ENCODE measurements at regions of chr4 and their contacts with region 1.

Region 1: GRCh38 chr4:125389713-125390112 is 75.0 kb downstream of the FAT4 start:
- DNase-seq: peak; percentile 83
- ATAC-seq: peak; percentile 97
- H3K4me3 ChIP-seq: peak overlapping the region; percentile 26; the same call in 1 of the 2 replicates
- H3K27ac ChIP-seq: peak overlapping the region; percentile 48
- H3K4me1 ChIP-seq: peaks cover 36% of the 10 kb centered on the region
- H3K27me3 ChIP-seq: no peaks in the 10 kb centered on the region
- CTCF ChIP-seq: no peak

Region 2: DNA sequence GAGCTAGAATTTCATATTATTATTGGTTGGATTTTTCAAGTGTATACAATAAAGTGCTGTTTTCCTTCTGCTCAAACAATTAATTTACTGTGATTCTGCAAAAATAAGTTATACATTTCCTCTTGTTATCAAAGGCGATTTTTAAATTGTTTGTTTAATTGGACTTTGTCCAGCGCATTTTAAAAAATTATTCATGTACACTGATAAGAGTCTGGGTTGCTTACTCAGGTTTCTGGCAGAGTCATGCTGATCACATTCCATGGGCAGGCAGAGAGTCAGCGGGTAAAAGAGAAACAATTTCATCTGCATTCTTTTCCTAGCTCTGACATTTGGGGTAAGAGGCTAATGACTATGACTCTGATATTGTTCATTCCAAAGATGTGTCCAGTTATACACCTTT is 66.1 kb before region 1 on chr4:
- CTCF ChIA-PET with region 1: no interaction called
- POLR2A ChIA-PET with region 1: no interaction called
- intact Hi-C with region 1: loop called (anchors 2 kb)
- DNase-seq: peak; percentile 68
- ATAC-seq: peak; percentile 58
- H3K4me3 ChIP-seq: no peak overlapping the region; the same call in 1 of the 2 replicates
- H3K27ac ChIP-seq: no peak overlapping the region
- H3K4me1 ChIP-seq: peaks cover 27% of the 10 kb centered on the region
- H3K27me3 ChIP-seq: no peaks in the 10 kb centered on the region
- CTCF ChIP-seq: no peak

Region 3: DNA sequence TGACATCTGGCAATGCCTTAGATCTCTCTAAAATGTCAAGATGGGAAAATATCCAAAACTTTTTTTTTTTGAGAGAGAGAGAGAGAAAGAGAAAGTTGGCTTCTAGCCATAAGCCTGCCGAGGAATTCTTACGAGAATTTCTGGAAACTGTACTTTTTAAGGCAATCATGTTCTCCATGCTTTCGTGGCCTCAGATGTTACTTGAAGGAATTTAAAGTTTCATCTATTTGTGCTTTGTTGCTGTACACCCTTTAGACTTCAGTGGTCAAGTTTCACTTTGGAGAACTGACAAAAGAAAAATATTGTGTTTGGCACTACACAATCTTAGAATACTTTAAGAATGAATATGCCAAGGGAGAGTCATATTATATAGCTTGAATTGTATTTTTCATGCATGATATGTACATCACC is 21.0 kb before region 1 on chr4:
- CTCF ChIA-PET with region 1: no interaction called
- POLR2A ChIA-PET with region 1: no interaction called
- intact Hi-C with region 1: loop called (anchors 2 kb)
- DNase-seq: peak; percentile 66
- ATAC-seq: peak; percentile 88
- H3K4me3 ChIP-seq: peak overlapping the region; percentile 53
- H3K27ac ChIP-seq: peak overlapping the region; percentile 41
- H3K4me1 ChIP-seq: peaks cover 20% of the 10 kb centered on the region
- H3K27me3 ChIP-seq: no peaks in the 10 kb centered on the region
- CTCF ChIP-seq: no peak

Region 4: GRCh38 chr4:125582302-125582701 is 192.6 kb after region 1 on chr4:
- CTCF ChIA-PET with region 1: no interaction called
- POLR2A ChIA-PET with region 1: no interaction called
- intact Hi-C with region 1: no loop called
- DNase-seq: peak; percentile 29
- ATAC-seq: peak; percentile 62
- H3K4me3 ChIP-seq: no peak overlapping the region
- H3K27ac ChIP-seq: no peak overlapping the region
- H3K4me1 ChIP-seq: no peaks in the 10 kb centered on the region; the same call in 1 of the 2 replicates
- H3K27me3 ChIP-seq: no peaks in the 10 kb centered on the region
- CTCF ChIP-seq: no peak

Region 5: DNA sequence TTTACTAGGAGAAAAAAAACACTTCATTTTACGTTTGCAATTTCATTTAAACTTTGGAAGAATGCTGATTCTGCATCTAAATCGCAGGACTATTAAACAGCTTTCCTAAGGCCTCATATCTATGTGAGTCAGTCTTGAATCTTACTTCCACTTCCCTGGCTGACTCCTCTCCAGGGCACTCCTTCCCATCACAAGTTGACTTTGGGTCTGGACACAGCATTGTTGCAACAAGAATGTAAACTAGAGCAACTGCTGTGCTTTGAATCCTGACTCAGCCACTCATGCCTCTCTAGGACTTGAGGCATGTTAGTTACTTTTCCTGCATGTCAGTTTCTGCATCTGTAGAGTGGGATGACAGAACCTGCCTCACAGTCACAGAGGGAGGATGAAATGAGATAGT is 338.9 kb after region 1 on chr4:
- CTCF ChIA-PET with region 1: no interaction called
- POLR2A ChIA-PET with region 1: no interaction called
- intact Hi-C with region 1: loop called (anchors 10 kb)
- DNase-seq: peak; percentile 88
- ATAC-seq: peak; percentile 97
- H3K4me3 ChIP-seq: no peak overlapping the region
- H3K27ac ChIP-seq: peak overlapping the region; percentile 56
- H3K4me1 ChIP-seq: peaks cover 38% of the 10 kb centered on the region
- H3K27me3 ChIP-seq: no peaks in the 10 kb centered on the region
- CTCF ChIP-seq: no peak

Measured in PC-3 (cell line).